Right ventricle myocardium inferior (tissue), 1 donor: ENCODE measurements at regions of chr4 and their contacts with region 1.

Region 1: DNA sequence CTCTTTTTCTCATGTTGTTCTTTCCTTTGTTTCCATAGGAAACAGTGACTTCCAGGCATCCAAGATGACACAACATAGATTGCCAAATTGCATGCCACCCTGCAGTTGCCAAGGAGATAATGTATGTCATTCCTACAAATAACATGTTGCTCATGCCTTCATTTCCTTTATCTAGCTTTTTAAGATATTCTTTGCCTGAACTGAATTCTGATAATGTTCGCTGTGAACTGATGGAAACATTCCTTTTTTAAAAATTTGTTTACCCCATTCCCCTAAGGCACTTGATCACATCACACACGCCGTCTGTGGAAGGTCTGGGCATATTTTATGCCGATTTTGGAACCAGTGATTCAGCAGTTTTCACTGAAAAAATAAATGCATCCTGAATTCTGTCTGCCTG is 38.0 kb upstream of the COX7B2 start:
- DNase-seq: no peak
- ATAC-seq: no peak

Region 2: DNA sequence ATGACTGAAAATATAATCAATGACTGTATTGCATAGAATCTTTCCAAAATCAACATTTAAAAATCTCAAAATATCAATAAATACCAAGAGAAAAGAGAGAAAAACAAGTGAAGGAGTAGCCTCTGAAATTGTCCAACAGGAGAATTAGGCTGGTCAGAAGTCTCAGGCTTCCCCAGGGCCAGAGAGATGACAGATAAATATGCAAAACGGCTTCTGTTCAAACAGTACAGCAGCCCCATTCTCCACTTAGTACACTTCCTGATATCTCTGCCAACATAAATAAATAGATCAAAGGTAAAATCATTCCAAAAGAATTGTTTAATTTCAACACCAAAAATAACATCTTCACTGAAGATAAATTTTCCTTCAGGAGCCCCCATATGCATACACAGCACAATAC is 352.3 kb before region 1 on chr4:
- intact Hi-C with region 1: no loop called
- DNase-seq: no peak
- ATAC-seq: no peak

Region 3: DNA sequence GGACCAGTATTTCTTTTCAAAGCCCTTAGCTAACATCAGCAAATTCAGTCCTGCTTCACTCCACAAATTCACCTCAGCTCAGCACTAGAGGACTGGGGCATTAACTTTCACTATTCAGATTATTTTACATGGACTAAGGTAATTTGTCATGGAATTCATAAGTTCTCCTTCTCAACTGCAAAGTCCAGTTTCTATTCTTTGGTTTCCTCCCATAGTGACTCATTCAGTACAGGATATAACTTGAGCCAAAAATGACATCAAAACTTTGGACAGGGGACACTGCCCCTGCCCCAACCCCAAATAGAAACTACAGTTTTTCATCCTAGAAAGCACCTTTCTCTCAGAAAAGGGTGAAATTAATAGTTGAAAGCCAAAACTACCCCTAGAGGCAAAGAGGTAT is 90.7 kb before region 1 on chr4:
- intact Hi-C with region 1: no loop called
- DNase-seq: no peak
- ATAC-seq: no peak

Region 4: DNA sequence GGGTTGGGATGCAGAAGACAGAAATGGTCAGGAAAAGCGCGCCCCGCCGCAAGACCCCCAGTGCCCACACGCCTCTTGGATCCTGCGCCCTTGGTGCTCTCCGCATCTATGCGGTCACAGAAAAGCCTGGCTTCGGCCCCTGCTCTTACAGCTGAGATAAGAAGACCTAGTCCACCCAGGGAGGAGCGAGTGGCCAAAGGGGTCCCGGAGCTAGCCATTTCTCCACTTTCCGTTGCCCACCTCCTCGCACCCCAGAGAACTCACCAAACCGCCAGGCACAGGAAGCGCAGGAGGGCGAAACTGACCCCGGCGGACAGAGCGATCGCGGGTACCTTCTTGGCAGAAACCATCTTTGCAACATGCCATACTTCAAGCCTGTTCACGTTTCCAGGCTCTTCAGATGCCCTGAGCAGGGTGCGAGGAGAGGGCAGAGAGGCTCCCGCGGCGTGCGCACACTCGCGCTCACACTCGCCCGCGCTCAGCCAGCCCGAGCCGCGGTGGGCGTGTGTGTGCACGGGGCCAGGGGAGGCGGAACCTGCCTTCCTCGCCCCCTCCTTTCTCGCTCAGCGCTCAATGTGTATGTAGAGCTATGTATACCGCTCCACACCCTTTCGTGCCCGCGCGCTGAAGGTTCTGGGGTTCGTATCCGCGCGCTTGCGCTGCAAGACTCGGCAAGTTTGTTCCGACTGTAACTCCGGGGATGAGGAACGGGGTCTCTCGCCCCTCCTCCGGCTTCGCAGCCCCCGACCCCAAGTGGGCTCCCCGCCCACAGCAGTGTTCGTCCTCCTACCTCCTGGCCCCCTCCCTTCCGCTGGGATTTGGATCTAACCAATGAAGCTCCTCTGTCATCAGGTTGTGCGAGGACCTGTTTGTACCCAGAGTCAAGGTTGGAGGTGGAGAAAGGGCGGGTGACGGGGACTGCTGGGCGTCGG is 46.3 kb after region 1 on chr4 and contains the start of gene GABRA4:
- intact Hi-C with region 1: loop called (anchors 5 kb)
- DNase-seq: peak; percentile 59
- ATAC-seq: peak; percentile 66
- total RNA-seq, gene GABRA4: 3.8 TPM

Region 5: GRCh38 chr4:47213971-47214370 is 267.0 kb after region 1 on chr4:
- intact Hi-C with region 1: no loop called
- DNase-seq: peak; percentile 13
- ATAC-seq: no peak

Region 6: DNA sequence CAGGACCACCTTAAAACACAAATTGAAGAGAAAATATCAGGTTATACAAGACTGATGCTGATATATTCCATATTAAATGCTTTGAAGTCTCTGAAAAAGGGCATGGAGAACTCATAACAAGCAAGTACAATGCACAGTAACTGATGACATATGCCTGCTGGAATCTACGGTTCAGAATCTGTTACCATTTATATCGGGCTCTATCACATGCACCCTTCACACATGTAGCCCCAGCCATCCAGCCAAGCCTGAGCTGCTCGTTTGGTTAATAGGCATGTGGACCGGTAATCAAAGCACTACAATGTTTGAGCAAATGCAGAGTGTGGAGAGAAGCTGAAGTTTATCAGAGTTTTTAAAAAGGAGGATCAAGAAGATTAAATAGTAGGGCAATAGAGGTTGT is 504.7 kb after region 1 on chr4:
- intact Hi-C with region 1: no loop called
- DNase-seq: no peak
- ATAC-seq: peak; percentile 48